Activated B cell treated with CpG ODN at 0.5 μM for 24 hours (primary cell): ENCODE measurements at regions of chr7 and their contacts with region 1.

Region 1: GRCh38 chr7:150378853-150379440 is at the start of gene ZNF775:
- DNase-seq: peak; percentile 90
- ATAC-seq: peak; percentile 93
- H3K4me3 Mint-ChIP-seq: peak within 1 kb of the TSS; percentile 90
- H3K27ac Mint-ChIP-seq: peak within 1 kb of the TSS; percentile 88
- H3K4me1 Mint-ChIP-seq: peaks cover 80% of the 10 kb centered on the region
- H3K27me3 Mint-ChIP-seq: no peaks in the 10 kb centered on the region
- CTCF ChIP-seq: no peak
- total RNA-seq, gene ZNF775: 8.0 and 8.8 TPM in 2 replicates

Region 2: DNA sequence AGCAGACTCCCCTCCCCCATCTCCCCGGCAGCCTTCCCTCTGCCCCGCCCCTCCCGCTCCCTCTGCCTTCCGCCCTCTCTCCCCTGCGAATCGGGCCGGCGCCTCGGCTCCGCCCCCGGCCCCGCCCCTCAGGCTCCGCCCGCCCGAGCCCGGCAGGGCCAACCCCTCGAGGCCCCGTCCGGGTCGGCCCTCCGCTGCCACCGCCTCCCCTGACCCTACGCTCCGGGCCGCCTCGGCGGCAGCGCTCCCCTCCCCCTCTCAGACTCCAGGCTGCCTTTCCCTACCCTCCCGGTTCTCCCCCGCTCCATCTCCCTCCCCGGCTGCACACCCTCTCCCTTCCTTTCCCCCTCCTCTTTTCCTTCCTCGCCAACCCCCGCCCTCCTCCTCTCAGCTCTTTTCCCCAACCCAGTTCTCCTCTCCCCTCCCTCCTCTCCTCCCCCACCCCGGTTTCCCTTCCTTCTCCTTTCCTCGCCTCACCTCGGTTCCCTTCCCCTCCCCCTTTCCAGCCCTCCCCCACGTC is 607.2 kb before region 1 on chr7:
- CTCF ChIA-PET with region 1: no interaction called
- POLR2A ChIA-PET with region 1: no interaction called
- intact Hi-C with region 1: loop called (anchors 5 kb)
- DNase-seq: peak; percentile 84
- ATAC-seq: peak; percentile 97
- H3K4me3 Mint-ChIP-seq: peak overlapping the region; percentile 80
- H3K27ac Mint-ChIP-seq: no peak overlapping the region
- H3K4me1 Mint-ChIP-seq: no peaks in the 10 kb centered on the region
- H3K27me3 Mint-ChIP-seq: peaks cover 8% of the 10 kb centered on the region
- CTCF ChIP-seq: no peak

Region 3: DNA sequence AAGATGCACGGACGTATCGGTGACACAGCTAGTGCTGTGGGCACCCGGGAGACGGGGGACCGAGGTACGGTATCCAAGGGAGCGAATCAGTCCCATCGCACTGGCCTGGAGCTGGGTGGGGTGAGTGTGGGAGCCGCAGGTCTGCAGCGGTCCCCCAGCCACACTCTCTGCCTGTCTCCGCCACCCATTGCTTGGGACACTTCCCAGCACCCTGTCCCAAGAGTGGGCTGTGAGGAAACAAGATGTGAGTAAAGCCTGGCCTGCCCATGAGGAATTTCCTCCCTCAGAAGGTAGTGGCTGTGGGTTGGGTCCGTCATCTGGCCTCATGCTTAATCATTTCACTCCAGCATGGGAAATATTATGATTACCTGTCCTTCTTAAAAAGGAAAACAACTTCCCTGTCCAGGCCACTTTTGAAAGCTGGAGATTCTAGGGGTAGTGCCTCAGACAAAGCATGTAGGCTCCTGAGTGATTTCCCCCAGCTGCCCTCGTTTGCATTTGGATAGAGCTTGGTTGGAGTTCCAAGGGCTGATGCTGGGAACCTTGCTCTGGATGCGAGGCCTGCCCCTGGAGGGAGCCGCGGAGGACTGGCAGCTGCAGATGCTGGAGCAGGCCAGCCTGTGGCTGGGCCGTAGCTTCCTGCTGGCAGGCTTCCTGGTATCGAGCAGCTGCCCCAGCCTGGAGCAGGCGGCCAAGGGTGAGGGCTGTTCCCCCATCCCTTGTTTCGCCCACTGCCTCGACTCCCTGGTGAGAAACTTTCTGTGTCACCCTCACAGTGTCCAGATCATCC is 49.4 kb before region 1 on chr7:
- CTCF ChIA-PET with region 1: no interaction called
- POLR2A ChIA-PET with region 1: no interaction called
- intact Hi-C with region 1: no loop called
- DNase-seq: no peak
- ATAC-seq: no peak
- H3K4me3 Mint-ChIP-seq: no peak overlapping the region
- H3K27ac Mint-ChIP-seq: no peak overlapping the region
- H3K4me1 Mint-ChIP-seq: peaks cover 4% of the 10 kb centered on the region
- H3K27me3 Mint-ChIP-seq: no peaks in the 10 kb centered on the region
- CTCF ChIP-seq: no peak

Region 4: DNA sequence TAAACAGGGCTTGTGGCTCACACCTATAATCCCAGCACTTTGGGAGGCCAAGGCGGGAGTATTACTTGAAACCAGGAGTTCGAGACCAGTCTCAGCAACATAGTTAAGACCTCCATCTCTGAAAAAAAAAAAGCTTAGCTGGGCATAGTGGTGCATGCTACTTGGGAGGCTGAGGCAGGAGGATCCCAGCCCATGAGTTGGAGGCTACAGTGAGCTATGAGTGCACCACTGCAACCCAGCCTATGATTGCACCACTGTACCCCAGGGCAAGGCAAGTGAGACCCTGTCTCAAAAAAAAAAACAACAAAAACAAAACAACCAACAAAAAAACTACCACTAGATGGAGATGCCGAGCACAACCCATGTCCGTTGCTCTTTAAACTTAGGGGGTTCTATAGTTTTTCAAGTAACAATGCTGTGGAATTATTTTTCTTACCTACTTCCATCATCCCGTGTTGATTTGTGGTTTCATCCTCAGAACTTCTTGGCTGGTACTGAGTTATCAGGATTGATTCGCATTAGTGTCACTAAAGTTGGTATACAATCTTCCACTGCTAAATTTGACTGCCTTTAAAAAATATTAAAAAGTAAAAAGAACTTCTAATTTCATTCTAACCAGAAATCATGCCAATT is 22.6 kb before region 1 on chr7:
- CTCF ChIA-PET with region 1: interaction called, 3 read pairs
- POLR2A ChIA-PET with region 1: interaction called, 13 read pairs
- intact Hi-C with region 1: loop called (anchors 1 kb)
- DNase-seq: no peak
- ATAC-seq: peak; percentile 57
- H3K4me3 Mint-ChIP-seq: no peak overlapping the region
- H3K27ac Mint-ChIP-seq: no peak overlapping the region
- H3K4me1 Mint-ChIP-seq: peaks cover 16% of the 10 kb centered on the region
- H3K27me3 Mint-ChIP-seq: no peaks in the 10 kb centered on the region
- CTCF ChIP-seq: peak; percentile 31

Region 5: GRCh38 chr7:150420987-150421674 is 42.2 kb after region 1 on chr7:
- CTCF ChIA-PET with region 1: no interaction called
- POLR2A ChIA-PET with region 1: interaction called, 5 read pairs
- intact Hi-C with region 1: loop called (anchors 1 kb)
- DNase-seq: peak; percentile 69
- ATAC-seq: peak; percentile 98
- H3K4me3 Mint-ChIP-seq: peak overlapping the region; percentile 47
- H3K27ac Mint-ChIP-seq: peak overlapping the region; percentile 19
- H3K4me1 Mint-ChIP-seq: peaks cover 7% of the 10 kb centered on the region
- H3K27me3 Mint-ChIP-seq: peaks cover 7% of the 10 kb centered on the region
- CTCF ChIP-seq: peak; percentile 94

Region 6: DNA sequence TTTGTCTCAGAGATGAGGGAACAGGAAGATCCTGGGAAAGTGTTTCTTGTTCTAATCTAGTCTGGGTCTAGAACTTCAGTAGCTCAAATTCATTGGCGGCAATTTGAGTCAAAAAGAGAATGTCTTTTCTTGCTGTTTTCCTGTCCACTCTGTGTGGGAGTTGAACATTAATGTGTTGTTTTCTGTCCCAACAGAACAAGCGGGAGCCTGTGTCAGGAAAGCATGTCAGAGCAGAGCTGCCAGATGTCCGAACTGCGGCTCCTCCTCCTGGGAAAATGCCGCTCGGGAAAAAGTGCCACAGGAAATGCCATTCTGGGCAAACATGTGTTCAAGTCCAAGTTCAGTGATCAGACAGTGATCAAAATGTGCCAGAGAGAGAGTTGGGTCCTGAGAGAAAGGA is 87.5 kb after region 1 on chr7:
- CTCF ChIA-PET with region 1: no interaction called
- POLR2A ChIA-PET with region 1: no interaction called
- intact Hi-C with region 1: no loop called
- DNase-seq: no peak
- ATAC-seq: no peak
- H3K4me3 Mint-ChIP-seq: no peak overlapping the region
- H3K27ac Mint-ChIP-seq: no peak overlapping the region
- H3K4me1 Mint-ChIP-seq: no peaks in the 10 kb centered on the region
- H3K27me3 Mint-ChIP-seq: peaks cover 3% of the 10 kb centered on the region
- CTCF ChIP-seq: no peak

Region 7: GRCh38 chr7:150675714-150676113 is 296.8 kb after region 1 on chr7:
- CTCF ChIA-PET with region 1: no interaction called
- POLR2A ChIA-PET with region 1: no interaction called
- intact Hi-C with region 1: no loop called
- DNase-seq: no peak
- ATAC-seq: no peak
- H3K4me3 Mint-ChIP-seq: no peak overlapping the region
- H3K27ac Mint-ChIP-seq: no peak overlapping the region
- H3K4me1 Mint-ChIP-seq: peaks cover 12% of the 10 kb centered on the region
- H3K27me3 Mint-ChIP-seq: peaks cover 6% of the 10 kb centered on the region
- CTCF ChIP-seq: no peak

Region 8: GRCh38 chr7:151028131-151028947 is 649.4 kb after region 1 on chr7 and contains the start of gene ABCB8:
- CTCF ChIA-PET with region 1: no interaction called
- POLR2A ChIA-PET with region 1: no interaction called
- intact Hi-C with region 1: loop called (anchors 5 kb)
- DNase-seq: peak; percentile 94
- ATAC-seq: peak; percentile 93
- H3K4me3 Mint-ChIP-seq: peak within 1 kb of the TSS; percentile 96
- H3K27ac Mint-ChIP-seq: peak within 1 kb of the TSS; percentile 97
- H3K4me1 Mint-ChIP-seq: peaks cover 22% of the 10 kb centered on the region
- H3K27me3 Mint-ChIP-seq: peaks cover 9% of the 10 kb centered on the region
- CTCF ChIP-seq: no peak
- total RNA-seq, gene ABCB8: 38.9 and 46.5 TPM in 2 replicates

Region 9: GRCh38 chr7:151400626-151401315 is 1021.8 kb after region 1 on chr7:
- CTCF ChIA-PET with region 1: no interaction called
- POLR2A ChIA-PET with region 1: no interaction called
- intact Hi-C with region 1: no loop called
- DNase-seq: peak; percentile 55
- ATAC-seq: peak; percentile 96
- H3K4me3 Mint-ChIP-seq: peak overlapping the region; percentile 36
- H3K27ac Mint-ChIP-seq: peak overlapping the region; percentile 81
- H3K4me1 Mint-ChIP-seq: peaks cover 26% of the 10 kb centered on the region
- H3K27me3 Mint-ChIP-seq: no peaks in the 10 kb centered on the region
- CTCF ChIP-seq: no peak